Lower leg skin (tissue), 4 donors: ENCODE measurements at regions of chr10 and their contacts with region 1.

Region 1: DNA sequence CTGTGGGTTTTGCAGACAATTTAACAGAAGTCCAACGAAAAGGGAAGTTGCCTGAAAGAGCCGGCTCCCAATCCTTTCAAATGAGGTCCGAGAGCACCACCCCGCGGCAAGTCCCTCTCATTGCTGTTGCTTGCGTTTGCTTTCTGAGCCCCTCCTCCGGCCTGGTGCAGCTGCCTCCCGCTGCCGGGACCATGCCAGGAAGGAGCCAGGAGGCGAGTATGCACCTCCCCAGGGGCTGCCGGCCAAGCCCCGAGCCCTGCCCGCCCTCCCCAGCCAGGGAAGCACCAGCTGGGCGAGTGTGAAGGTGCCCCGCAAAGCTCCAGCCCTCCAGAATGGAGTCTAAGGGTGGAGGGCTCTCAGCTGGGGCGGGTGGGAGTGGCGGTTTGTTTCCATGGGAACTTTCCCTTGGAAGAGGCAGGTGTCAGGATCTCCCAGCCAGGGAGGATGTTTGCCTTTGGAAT is 25.8 kb upstream of the PPP2R2D start:
- DNase-seq: peak; percentile 50 to 91
- H3K4me3 ChIP-seq: no peak overlapping the region
- CTCF ChIP-seq: no peak
- POLR2A ChIP-seq: no peak

Region 2: GRCh38 chr10:130215151-130215930 is 1659.7 kb before region 1 on chr10:
- intact Hi-C with region 1: loop called (anchors 10 kb)
- DNase-seq: no peak
- H3K4me3 ChIP-seq: no peak overlapping the region
- CTCF ChIP-seq: no peak
- POLR2A ChIP-seq: no peak

Region 3: GRCh38 chr10:131579251-131580071 is 295.6 kb before region 1 on chr10:
- intact Hi-C with region 1: no loop called
- DNase-seq: peak; percentile 8 to 65
- H3K4me3 ChIP-seq: no peak overlapping the region
- CTCF ChIP-seq: no peak
- POLR2A ChIP-seq: no peak

Region 4: GRCh38 chr10:131928248-131929095 is 53.5 kb after region 1 on chr10:
- intact Hi-C with region 1: no loop called
- DNase-seq: no peak
- H3K4me3 ChIP-seq: no peak overlapping the region
- CTCF ChIP-seq: no peak
- POLR2A ChIP-seq: no peak

Region 5: GRCh38 chr10:132281915-132282666 is 407.1 kb after region 1 on chr10:
- intact Hi-C with region 1: no loop called
- DNase-seq: no peak
- H3K4me3 ChIP-seq: no peak overlapping the region
- CTCF ChIP-seq: no peak
- POLR2A ChIP-seq: no peak